ENCODE measurements at regions of chr10 and their contacts with region 1.

Region 1: DNA sequence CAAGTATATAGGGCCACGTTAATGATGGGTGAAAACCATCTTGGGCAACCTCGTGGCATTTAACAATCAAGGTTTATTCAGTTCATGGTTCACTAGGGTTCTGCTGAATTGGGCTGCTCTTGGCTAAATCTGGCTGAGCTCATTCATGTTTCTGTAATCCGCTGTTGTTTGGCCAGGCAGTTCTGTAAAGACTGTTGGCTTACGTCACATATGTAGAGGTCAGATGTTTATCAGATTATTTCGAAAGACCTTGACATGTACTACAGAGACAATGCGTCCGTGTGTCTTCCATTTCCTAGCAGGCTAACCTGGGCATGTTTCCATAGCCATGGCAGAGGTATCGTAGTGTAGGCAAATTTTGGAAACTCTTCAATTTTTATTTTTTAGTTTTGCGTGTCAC is 190.0 kb upstream of the ZWINT start:
- DNase-seq: no peak

Region 2: DNA sequence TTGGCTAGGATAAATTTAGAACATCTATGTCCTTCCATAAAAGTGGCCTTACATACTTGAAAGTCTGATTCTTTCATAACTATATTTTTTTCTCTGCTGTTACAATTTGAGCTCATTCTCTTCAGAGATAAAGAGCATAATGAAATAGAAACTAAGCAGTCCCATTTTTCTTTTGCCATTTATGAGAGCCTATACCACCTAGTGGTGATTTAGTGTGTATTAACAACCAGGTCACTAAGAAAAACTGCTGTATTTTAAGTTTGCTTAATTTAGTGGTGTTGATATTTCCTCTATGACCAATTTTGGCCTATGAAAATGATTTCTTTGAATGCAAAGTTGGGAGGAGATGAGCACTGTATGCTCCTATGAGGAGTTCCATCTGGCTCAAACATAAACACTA is 101.3 kb before region 1 on chr10:
- intact Hi-C with region 1: loop called in 1 of 2 experiments (anchors 5 kb)
- DNase-seq: no peak